GM13976 (cell line): ENCODE measurements at regions of chr12 and their contacts with region 1.

Region 1: DNA sequence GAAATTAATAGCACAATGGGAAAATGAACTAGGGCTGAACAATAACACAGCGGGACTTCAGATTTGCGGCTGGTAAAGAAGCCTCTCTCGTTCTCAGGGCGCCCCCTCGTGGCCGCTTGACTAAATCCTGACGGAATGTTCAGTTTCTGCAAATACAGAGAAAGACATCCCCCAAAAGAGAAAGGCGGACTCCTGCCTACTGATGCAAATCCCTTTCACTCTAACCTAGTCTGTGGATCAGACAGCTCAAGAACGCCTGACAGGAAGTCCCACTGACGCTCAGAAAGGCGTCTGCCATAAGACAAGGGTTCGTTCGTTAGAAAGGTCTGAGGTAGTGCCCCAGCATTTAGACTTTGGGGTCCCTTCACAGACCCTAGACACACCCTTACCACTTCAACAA is 2.5 kb downstream of the NUAK1 start:
- DNase-seq: peak; percentile 77
- CTCF ChIP-seq: peak; percentile 79

Region 2: GRCh38 chr12:105420659-105421240 is 715.5 kb before region 1 on chr12:
- in situ Hi-C with region 1: loop called (anchors 10 kb)
- DNase-seq: peak; percentile 51
- CTCF ChIP-seq: peak; percentile 87

Region 3: GRCh38 chr12:105705765-105706164 is 430.5 kb before region 1 on chr12:
- in situ Hi-C with region 1: loop called (anchors 25 kb)
- DNase-seq: peak; percentile 14
- CTCF ChIP-seq: peak; percentile 34